Activated naive CD4-positive, alpha-beta T cell treated with anti-CD3 and anti-CD28 coated beads for 36 hours (primary cell): ENCODE measurements at regions of chr3 and their contacts with region 1.

Region 1: DNA sequence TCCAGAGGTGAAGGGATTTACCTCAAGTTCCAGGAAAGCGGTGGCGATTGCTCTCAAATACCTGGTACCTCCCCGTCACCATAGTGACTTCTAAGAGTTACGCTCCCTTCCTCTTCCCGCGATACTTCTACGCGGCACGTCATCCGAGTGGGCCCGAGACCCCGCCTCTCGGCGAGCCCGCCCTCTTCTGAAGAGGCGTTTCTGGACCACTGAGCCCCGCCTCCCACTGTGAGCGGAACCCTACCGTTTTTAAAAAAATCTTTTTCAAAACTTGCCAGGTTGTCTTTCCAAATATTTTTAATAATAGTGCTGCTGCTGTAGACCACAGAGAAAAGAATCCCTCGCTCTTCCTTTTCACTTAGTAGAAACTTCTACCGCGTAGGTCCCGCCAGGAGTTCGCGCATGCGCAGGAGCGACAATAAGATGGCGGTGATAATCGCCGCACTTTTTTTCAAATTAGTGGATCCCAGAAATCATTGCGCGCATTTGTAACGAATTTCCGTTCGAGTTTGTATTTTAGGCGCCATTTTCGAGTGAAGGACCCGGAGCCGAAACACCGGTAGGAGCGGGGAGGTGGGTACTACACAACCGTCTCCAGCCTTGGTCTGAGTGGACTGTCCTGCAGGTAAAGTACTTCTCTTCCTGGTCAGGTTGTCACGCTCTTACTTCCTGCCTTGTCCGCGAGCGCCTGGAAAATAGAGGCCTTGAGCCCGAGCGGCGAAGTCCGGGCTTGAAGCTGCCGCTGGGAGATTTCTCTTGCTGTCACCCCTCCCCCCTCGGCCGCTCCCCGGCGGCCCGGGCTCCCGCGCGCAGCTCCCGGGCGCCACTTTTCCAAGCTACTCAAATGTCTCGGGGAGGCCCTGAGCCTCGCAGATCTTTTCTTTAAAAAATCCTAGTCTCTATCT is at the starts of genes IFT80 and SMC4:
- DNase-seq: peak; percentile 98
- H3K4me3 Mint-ChIP-seq: peak within 1 kb of the TSS; percentile 91
- H3K27ac Mint-ChIP-seq: peak within 1 kb of the TSS; percentile 97
- H3K4me1 Mint-ChIP-seq: peaks cover 39% of the 10 kb centered on the region
- H3K27me3 Mint-ChIP-seq: peaks cover 7% of the 10 kb centered on the region
- total RNA-seq, gene IFT80: 9.3 to 9.9 TPM
- total RNA-seq, gene SMC4: 187 to 191 TPM

Region 2: DNA sequence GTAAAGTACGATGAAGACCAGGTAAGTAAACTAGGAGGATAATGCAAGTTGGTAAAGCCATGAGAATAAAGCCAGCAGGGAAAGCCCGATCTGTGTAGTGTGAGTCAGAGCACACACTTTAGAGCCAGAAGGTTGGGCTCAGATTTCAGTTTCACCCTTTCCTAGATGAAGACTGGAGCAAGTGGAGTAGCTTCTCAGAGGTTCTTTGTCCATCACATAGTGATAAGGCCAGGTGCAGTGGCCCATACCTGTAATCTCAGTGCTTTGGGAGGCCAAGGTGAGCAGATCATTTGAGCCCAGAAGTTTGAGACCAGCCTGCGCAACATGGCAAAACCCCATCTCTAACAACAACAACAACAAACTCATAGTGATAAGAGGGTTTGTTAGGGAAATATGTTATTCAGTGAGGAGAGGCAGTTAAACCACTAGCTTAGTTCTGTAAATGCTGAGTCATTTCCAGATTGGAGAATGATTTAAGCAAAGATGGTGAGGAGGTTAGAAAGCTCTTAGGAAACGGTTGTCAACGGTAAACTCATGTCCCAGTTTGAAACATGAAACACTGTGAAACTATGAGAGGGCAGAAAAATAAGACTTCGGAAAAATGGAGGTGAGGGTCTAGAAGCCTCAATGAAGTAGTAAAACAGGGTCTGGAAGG is 371.7 kb before region 1 on chr3:
- CTCF ChIA-PET with region 1: interaction called, 3 read pairs
- intact Hi-C with region 1: loop called (anchors 5 kb)
- DNase-seq: peak; percentile 24
- H3K4me3 Mint-ChIP-seq: no peak overlapping the region
- H3K27ac Mint-ChIP-seq: peak overlapping the region; percentile 32
- H3K4me1 Mint-ChIP-seq: peaks cover 12% of the 10 kb centered on the region
- H3K27me3 Mint-ChIP-seq: no peaks in the 10 kb centered on the region

Region 3: DNA sequence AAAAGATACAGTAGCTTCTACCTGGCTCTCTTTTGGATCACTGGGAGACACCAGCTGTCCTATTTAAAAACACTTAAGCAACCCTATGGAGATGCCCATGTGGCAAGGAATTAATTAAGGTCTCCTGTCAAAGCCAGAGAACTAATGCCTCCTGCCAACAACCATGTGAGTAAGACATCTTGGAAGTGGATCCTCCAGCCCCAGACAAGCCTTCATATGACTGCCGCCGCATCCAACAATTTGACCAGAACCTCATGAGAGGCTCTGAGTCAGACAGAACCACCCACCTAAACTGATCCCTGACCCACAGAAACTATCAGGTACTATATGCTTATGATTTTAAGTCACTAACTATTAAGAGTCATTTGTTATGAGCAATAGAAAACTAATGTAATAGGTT is 22.7 kb before region 1 on chr3:
- CTCF ChIA-PET with region 1: no interaction called
- intact Hi-C with region 1: no loop called
- DNase-seq: no peak
- H3K4me3 Mint-ChIP-seq: no peak overlapping the region
- H3K27ac Mint-ChIP-seq: no peak overlapping the region
- H3K4me1 Mint-ChIP-seq: peaks cover 4% of the 10 kb centered on the region
- H3K27me3 Mint-ChIP-seq: no peaks in the 10 kb centered on the region

Region 4: DNA sequence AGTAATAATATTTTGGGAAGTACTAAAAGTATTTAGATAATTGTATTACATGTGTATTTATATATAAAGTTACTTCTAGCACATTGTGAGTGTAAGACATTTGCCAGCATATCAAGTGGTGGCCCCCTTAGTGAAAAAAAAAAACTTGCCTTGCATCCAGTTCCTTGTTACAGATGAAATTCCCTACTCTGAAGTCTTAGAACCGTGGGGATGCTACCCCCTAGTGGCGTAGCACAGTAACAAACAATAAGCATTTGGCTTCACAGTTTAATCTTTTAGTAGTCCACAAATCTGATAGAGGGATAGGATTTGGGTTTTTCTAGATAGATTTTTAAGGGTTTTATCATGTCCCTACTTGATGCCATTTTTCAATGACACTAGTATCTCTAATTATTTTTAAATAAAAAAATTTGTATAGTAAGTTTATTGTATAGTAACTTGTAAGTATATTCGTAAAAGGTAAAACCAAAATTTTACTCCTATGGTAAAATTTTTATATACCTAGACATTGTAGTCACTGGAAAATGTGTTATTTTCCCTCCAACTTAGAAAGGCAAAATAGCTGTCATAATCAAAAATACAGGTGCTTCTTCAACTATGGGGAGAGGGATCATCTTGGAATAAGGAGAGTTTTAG is 14.4 kb after region 1 on chr3:
- CTCF ChIA-PET with region 1: interaction called, 4 read pairs
- intact Hi-C with region 1: loop called (anchors 1 kb)
- DNase-seq: peak; percentile 65
- H3K4me3 Mint-ChIP-seq: no peak overlapping the region
- H3K27ac Mint-ChIP-seq: no peak overlapping the region
- H3K4me1 Mint-ChIP-seq: peaks cover 2% of the 10 kb centered on the region
- H3K27me3 Mint-ChIP-seq: no peaks in the 10 kb centered on the region

Region 5: DNA sequence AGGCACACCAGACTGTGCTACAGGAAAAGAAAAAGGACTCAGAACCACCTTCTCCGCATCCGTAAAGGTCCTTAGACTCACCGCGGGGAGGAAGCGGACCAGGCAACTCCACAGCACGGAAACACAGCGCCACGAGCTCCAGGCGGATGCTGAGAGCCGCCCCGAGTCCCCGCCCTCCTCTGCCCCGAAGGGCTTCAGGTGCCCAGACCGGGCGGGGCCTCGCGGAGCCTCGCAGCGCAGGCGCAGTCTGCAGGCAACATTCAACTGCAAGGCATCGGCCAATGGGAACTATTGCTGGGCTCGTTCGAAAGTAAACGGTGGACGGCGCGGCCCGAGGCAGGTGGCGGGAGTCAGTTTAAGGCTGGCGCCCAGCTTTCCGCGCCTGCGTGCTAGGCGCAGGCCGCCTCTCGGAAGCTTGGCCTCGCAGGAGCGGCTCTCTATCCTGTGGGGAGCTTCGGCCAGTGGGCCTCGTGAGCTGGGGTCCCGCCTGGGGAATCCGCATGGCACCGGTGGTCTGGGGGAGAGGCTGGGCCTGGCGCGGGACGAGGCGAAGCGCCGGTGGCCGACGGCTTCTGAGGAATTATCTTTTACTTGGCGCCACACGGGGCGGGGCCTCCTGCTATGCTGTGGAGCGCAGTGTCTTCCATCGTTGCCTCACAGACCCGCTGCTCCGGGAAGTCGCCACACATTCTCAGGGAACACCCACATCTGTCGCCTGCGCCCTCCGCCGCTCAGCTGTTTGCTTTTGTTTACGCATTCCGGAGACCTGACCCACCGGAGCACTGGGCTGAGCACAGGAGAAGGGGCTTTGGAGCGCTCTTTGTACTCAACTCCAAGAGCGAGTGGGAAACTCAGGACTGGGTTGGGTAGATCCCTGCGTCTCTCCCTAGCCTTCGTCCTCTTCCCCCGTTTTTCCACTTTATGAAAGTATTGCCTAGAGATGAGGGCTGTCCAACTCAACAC is 50.5 kb after region 1 on chr3 and contains the start of gene TRIM59:
- CTCF ChIA-PET with region 1: interaction called, 4 read pairs
- intact Hi-C with region 1: loop called (anchors 1 kb)
- DNase-seq: peak; percentile 98
- H3K4me3 Mint-ChIP-seq: peak within 1 kb of the TSS; percentile 91
- H3K27ac Mint-ChIP-seq: peak within 1 kb of the TSS; percentile 90
- H3K4me1 Mint-ChIP-seq: peaks cover 26% of the 10 kb centered on the region
- H3K27me3 Mint-ChIP-seq: no peaks in the 10 kb centered on the region
- total RNA-seq, gene TRIM59: 25.8 TPM

Region 6: GRCh38 chr3:160754855-160755747 is 355.7 kb after region 1 on chr3:
- CTCF ChIA-PET with region 1: no interaction called
- intact Hi-C with region 1: loop called (anchors 1 kb)
- DNase-seq: peak; percentile 90
- H3K4me3 Mint-ChIP-seq: peak overlapping the region; percentile 86
- H3K27ac Mint-ChIP-seq: peak overlapping the region; percentile 86
- H3K4me1 Mint-ChIP-seq: peaks cover 23% of the 10 kb centered on the region
- H3K27me3 Mint-ChIP-seq: peaks cover 12% of the 10 kb centered on the region

Region 7: GRCh38 chr3:161393803-161394202 is 994.4 kb after region 1 on chr3:
- CTCF ChIA-PET with region 1: no interaction called
- intact Hi-C with region 1: loop called (anchors 1 kb)
- DNase-seq: no peak
- H3K4me3 Mint-ChIP-seq: no peak overlapping the region
- H3K27ac Mint-ChIP-seq: no peak overlapping the region
- H3K4me1 Mint-ChIP-seq: peaks cover 55% of the 10 kb centered on the region
- H3K27me3 Mint-ChIP-seq: no peaks in the 10 kb centered on the region